Activated CD8-positive, alpha-beta T cell treated with anti-CD3 and anti-CD28 coated beads for 36 hours (primary cell): ENCODE measurements at regions of chr5 and their contacts with region 1.

Region 1: DNA sequence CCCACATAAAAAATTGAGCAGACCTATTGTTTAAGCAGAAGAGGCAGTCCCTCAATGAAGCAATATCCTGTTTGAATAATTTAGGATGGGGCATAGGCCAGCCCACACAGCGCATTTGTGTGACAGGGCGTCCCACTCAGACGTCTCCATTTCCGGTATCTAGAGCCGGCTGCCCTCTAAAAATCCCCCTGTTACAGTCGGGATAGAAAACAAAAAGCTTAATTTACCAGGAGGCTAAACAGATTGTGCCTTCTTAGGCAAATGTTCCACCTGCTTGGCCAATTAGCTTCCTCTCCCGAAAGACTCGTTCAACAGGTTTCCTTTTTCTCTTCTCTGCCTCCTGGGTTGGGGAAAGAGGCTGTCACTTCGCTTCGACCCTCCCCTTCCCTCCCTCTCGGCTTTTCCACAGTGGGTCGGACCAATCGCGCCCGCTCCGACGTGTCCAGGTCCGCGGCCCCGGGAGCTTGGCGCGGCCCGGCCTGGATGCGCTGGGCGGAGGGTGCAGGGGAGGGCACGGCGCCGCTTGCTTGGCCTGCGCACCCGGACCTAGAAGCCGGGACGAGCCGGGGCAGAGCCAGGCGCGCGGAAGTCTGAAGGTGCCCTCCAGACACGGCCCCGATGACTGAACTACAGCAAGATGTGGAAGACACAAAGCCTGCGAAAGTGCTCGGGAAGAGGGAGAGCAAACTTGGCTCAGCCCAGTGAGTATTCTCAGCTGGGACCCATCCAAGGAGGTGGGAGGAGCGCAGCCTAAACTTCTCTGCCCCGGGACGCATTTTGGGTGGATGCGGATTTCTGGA is at the start of gene GRAMD2B:
- DNase-seq: peak; percentile 88
- ATAC-seq: peak; percentile 92
- H3K4me3 Mint-ChIP-seq: peak within 1 kb of the TSS; percentile 85
- H3K27ac Mint-ChIP-seq: peak within 1 kb of the TSS; percentile 90
- H3K4me1 Mint-ChIP-seq: peaks cover 33% of the 10 kb centered on the region
- H3K27me3 Mint-ChIP-seq: no peaks in the 10 kb centered on the region
- CTCF ChIP-seq: no peak
- total RNA-seq, gene GRAMD2B: 8.0 to 8.4 TPM

Region 2: GRCh38 chr5:126438267-126438666 is 15.1 kb after region 1 on chr5:
- CTCF ChIA-PET with region 1: interaction called, 3 read pairs
- POLR2A ChIA-PET with region 1: interaction called, 13 read pairs
- intact Hi-C with region 1: no loop called
- DNase-seq: peak; percentile 12
- ATAC-seq: peak; percentile 91
- H3K4me3 Mint-ChIP-seq: no peak overlapping the region
- H3K27ac Mint-ChIP-seq: peak overlapping the region; percentile 62
- H3K4me1 Mint-ChIP-seq: peaks cover 30% of the 10 kb centered on the region
- H3K27me3 Mint-ChIP-seq: no peaks in the 10 kb centered on the region
- CTCF ChIP-seq: no peak

Region 3: GRCh38 chr5:126449751-126450271 is 26.6 kb after region 1 on chr5:
- CTCF ChIA-PET with region 1: interaction called, 4 read pairs
- POLR2A ChIA-PET with region 1: interaction called, 27 read pairs
- intact Hi-C with region 1: loop called (anchors 1 kb)
- DNase-seq: peak; percentile 85
- ATAC-seq: peak; percentile 85
- H3K4me3 Mint-ChIP-seq: peak overlapping the region; percentile 85
- H3K27ac Mint-ChIP-seq: peak overlapping the region; percentile 100
- H3K4me1 Mint-ChIP-seq: peaks cover 75% of the 10 kb centered on the region
- H3K27me3 Mint-ChIP-seq: no peaks in the 10 kb centered on the region
- CTCF ChIP-seq: no peak